Spleen (tissue), 13 donors: ENCODE measurements at regions of chr16 and their contacts with region 1.

Region 1: DNA sequence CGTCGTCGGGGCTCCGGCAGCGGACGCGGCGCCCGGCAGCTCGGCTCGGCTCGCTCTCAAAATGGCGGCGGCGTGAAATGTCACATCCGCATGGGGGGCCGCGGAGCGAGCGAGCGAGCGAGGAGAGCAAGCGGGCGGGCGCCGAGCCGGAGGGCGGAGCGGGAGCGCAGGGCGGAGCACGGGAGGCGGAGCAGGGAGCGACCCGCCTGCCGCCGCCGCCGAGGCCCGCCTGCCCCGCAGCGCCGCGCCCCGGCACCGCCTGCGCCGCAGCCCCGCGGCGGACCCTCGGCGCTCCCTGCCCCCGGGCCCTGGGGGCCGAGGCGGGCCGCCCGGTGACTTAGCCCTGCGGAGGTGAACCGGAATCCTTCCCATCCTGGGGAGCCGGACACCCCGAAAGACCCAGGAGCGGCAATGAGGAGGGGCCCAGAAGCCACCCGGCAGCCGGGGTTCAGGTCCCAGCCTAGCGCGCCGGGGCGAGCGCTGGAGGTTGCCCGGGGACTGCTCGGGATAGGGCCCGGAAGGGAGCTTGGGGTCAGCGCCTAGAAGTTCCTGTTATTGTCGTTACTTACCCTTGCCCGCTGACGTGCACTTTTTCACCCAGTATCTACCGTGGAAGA is at the start of gene USP7:
- DNase-seq: peak; percentile 100
- H3K4me3 ChIP-seq: peak within 1 kb of the TSS; percentile 56 to 93 (median 83)
- H3K27ac ChIP-seq: peak within 1 kb of the TSS; percentile 66 to 94 (median 88)
- H3K4me1 ChIP-seq: peaks cover 33 to 61% (median 40%) of the 10 kb centered on the region in 6 donors
- H3K27me3 ChIP-seq: no peaks in the 10 kb centered on the region
- CTCF ChIP-seq: no peak
- POLR2A ChIP-seq: peak in 1 of 3 donors; percentile 14
- total RNA-seq, gene USP7: 102 to 145 (median 128) TPM

Region 2: DNA sequence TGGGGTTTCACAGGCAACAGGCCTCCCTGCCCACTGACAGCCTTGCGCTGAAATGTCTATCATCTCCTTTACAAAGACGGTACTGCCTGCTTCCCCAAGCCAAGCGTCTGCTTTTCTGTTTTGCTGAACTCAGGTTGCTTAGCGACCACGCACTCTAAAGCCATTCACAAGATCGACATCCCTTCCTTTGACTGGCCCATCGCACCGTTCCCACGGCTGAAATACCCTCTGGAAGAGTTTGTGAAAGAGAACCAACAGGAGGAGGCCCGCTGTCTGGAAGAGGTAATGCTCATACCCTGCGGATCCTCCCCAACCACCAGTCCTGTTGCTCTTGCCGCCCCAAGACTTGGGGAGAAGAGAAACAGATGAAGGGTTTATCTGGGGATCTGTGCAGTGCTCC is 195.2 kb before region 1 on chr16:
- intact Hi-C with region 1: no loop called
- DNase-seq: peak; percentile 44
- H3K4me3 ChIP-seq: no peak overlapping the region
- H3K27ac ChIP-seq: no peak overlapping the region
- H3K4me1 ChIP-seq: no peaks in the 10 kb centered on the region
- H3K27me3 ChIP-seq: no peaks in the 10 kb centered on the region
- CTCF ChIP-seq: no peak
- POLR2A ChIP-seq: no peak

Region 3: GRCh38 chr16:9090960-9091866 is 127.3 kb after region 1 on chr16 and contains the start of gene HAPSTR1:
- intact Hi-C with region 1: loop called (anchors 10 kb)
- DNase-seq: peak; percentile 100
- H3K4me3 ChIP-seq: peak within 1 kb of the TSS; percentile 63 to 96 (median 83)
- H3K27ac ChIP-seq: peak within 1 kb of the TSS; percentile 97 to 100 (median 100)
- H3K4me1 ChIP-seq: peaks cover 29 to 50% (median 43%) of the 10 kb centered on the region in 6 donors
- H3K27me3 ChIP-seq: no peaks in the 10 kb centered on the region
- CTCF ChIP-seq: peak in 2 of 11 experiments; percentile 16 to 21
- POLR2A ChIP-seq: peak; percentile 98 to 99 (median 99)
- total RNA-seq, gene HAPSTR1: 60.0 to 84.1 (median 76.3) TPM